CD4-positive, alpha-beta memory T cell (primary cell): ENCODE measurements at regions of chr11 and their contacts with region 1.

Region 1: DNA sequence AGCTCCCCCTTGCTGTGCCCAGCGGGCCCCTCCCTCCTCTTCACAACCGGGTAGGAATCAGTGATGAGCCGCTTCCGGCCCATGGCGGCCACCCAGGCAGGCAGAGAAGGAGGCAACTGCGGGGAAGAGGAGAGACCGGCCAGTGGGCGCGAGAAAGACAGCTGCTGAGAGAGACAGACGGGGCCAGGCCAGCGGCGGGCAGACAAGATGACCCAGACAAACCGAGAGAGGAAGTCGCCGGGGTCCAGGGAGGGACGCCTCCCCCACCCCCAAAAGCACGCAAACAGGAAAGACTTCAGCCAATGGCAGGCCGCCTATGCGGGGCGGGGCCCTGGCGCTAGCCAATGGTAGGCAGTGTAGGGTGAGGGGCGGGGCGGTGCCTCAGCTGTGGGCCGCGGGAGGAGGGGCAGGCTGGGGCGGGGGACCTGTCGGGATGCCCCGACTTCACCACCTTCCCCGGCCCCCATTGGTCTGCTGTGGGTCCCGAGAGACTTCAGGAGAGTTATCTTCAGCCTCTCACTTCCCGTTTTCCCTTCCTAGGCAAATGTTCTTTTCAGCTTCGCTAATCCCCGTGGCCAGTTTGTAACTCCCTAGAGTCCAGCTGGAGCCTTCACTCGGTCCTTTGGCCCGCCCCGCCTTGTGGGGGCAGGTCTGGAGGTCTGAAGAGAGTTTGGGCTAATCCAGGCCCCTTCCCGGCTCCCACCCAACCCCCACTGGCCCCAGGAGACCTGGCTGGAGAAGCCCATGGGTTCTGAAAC is at the start of gene POLD4:
- DNase-seq: peak; percentile 94 to 96 (median 95)
- H3K4me3 ChIP-seq: peak within 1 kb of the TSS; percentile 86 to 99
- H3K4me3 Mint-ChIP-seq: peak within 1 kb of the TSS; percentile 97 to 100 (median 99)
- H3K27ac ChIP-seq: peak within 1 kb of the TSS; percentile 96
- H3K27ac Mint-ChIP-seq: peak within 1 kb of the TSS; percentile 99 to 100 (median 100)
- H3K4me1 ChIP-seq: peaks cover 51% of the 10 kb centered on the region
- H3K4me1 Mint-ChIP-seq: peaks cover 31 to 68% (median 44%) of the 10 kb centered on the region in 4 donors
- H3K27me3 ChIP-seq: no peaks in the 10 kb centered on the region
- H3K27me3 Mint-ChIP-seq: no peaks in the 10 kb centered on the region
- total RNA-seq, gene POLD4: 87.9 to 91.3 TPM

Region 2: GRCh38 chr11:67277231-67277961 is 76.1 kb before region 1 on chr11:
- CTCF ChIA-PET with region 1: interaction called, 3 read pairs
- POLR2A ChIA-PET with region 1: interaction called, 19 read pairs
- intact Hi-C with region 1: no loop called
- DNase-seq: peak; percentile 92 to 96 (median 93)
- H3K4me3 ChIP-seq: peak overlapping the region; percentile 63 to 71
- H3K4me3 Mint-ChIP-seq: peak overlapping the region; percentile 79 to 92 (median 83)
- H3K27ac ChIP-seq: peak overlapping the region; percentile 95
- H3K27ac Mint-ChIP-seq: peak overlapping the region; percentile 94 to 99 (median 97)
- H3K4me1 ChIP-seq: peaks cover 98% of the 10 kb centered on the region
- H3K4me1 Mint-ChIP-seq: peaks cover 25 to 90% (median 54%) of the 10 kb centered on the region in 4 donors
- H3K27me3 ChIP-seq: no peaks in the 10 kb centered on the region
- H3K27me3 Mint-ChIP-seq: no peaks in the 10 kb centered on the region

Region 3: DNA sequence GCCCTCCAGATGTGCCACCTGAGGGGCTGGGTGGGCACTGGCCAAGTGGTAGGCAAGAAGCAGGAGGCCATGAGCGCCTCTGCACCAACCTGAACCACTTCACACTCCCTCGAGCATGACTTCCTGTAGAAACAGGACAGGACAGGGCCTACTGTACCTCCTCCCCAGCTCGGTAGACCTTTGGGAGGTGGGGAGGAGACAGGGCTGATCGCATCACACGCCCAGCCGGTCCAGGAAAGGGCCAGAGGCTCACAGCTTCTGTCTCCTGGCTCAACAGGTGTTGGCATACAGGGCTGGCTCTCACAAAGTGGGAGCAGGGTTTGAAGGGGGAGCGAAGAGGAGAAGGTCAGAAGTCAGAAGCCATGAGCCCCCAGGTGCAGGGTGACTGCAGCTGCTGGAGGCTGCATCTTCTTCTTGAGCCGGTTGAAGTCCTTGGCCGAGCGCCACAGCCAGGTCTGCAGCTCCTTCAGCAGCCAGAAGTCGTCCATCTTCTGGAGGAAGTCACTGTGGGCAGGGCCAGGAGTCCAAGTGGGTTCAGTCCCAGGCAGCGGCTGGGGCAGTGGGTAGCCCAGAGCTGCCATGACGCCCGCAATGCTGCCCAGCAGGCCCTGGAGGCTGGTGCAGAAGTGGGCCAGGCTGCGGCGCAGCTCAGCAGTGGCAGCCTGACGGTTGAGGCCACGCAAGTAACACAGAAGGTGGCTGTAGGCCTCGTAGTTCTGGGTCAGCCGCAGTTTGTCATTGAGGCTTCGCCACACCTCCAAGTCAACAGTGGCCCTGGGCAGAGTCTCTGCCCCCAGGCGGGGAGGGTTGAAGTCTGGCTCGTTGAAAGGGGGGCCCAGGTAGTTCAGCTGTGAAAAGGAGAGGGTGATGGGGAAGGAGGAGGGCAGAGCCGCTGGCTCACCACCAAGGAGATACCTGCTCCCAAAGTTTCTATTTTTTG is 11.6 kb after region 1 on chr11:
- CTCF ChIA-PET with region 1: interaction called, 1,065 read pairs
- POLR2A ChIA-PET with region 1: interaction called, 449 read pairs
- intact Hi-C with region 1: no loop called
- DNase-seq: no peak
- H3K4me3 ChIP-seq: no peak overlapping the region
- H3K4me3 Mint-ChIP-seq: peak overlapping the region in 7 of 8 donors; percentile 40 to 82 (median 66)
- H3K27ac ChIP-seq: no peak overlapping the region
- H3K27ac Mint-ChIP-seq: peak overlapping the region; percentile 75 to 95 (median 87)
- H3K4me1 ChIP-seq: peaks cover 50% of the 10 kb centered on the region
- H3K4me1 Mint-ChIP-seq: peaks cover 51 to 80% (median 66%) of the 10 kb centered on the region in 4 donors
- H3K27me3 ChIP-seq: no peaks in the 10 kb centered on the region
- H3K27me3 Mint-ChIP-seq: no peaks in the 10 kb centered on the region

Region 4: GRCh38 chr11:67401495-67402191 is 48.1 kb after region 1 on chr11 and contains the start of gene PPP1CA:
- CTCF ChIA-PET with region 1: interaction called, 9 read pairs
- POLR2A ChIA-PET with region 1: interaction called, 84 read pairs
- intact Hi-C with region 1: no loop called
- DNase-seq: peak; percentile 87 to 97 (median 92)
- H3K4me3 ChIP-seq: peak within 1 kb of the TSS; percentile 78 to 88
- H3K4me3 Mint-ChIP-seq: peak within 1 kb of the TSS; percentile 89 to 97 (median 92)
- H3K27ac ChIP-seq: peak within 1 kb of the TSS; percentile 81
- H3K27ac Mint-ChIP-seq: peak within 1 kb of the TSS; percentile 83 to 98 (median 89)
- H3K4me1 ChIP-seq: peaks cover 78% of the 10 kb centered on the region
- H3K4me1 Mint-ChIP-seq: peaks cover 27 to 80% (median 45%) of the 10 kb centered on the region in 4 donors
- H3K27me3 ChIP-seq: no peaks in the 10 kb centered on the region
- H3K27me3 Mint-ChIP-seq: no peaks in the 10 kb centered on the region
- total RNA-seq, gene PPP1CA: 159 to 161 TPM

Region 5: GRCh38 chr11:67482825-67483798 is 129.6 kb after region 1 on chr11 and contains the start of gene AIP:
- CTCF ChIA-PET with region 1: interaction called, 6 read pairs
- POLR2A ChIA-PET with region 1: interaction called, 15 read pairs
- intact Hi-C with region 1: loop called (anchors 2 kb)
- DNase-seq: peak; percentile 97 to 98 (median 98)
- H3K4me3 ChIP-seq: peak within 1 kb of the TSS; percentile 64 to 78
- H3K4me3 Mint-ChIP-seq: peak within 1 kb of the TSS; percentile 95 to 100 (median 98)
- H3K27ac ChIP-seq: peak within 1 kb of the TSS; percentile 91
- H3K27ac Mint-ChIP-seq: peak within 1 kb of the TSS; percentile 94 to 100 (median 99)
- H3K4me1 ChIP-seq: peaks cover 57% of the 10 kb centered on the region
- H3K4me1 Mint-ChIP-seq: peaks cover 41 to 59% (median 50%) of the 10 kb centered on the region in 4 donors
- H3K27me3 ChIP-seq: no peaks in the 10 kb centered on the region
- H3K27me3 Mint-ChIP-seq: no peaks in the 10 kb centered on the region
- total RNA-seq, gene AIP: 131 to 132 TPM

Region 6: GRCh38 chr11:67656278-67656922 is 302.9 kb after region 1 on chr11:
- CTCF ChIA-PET with region 1: no interaction called
- POLR2A ChIA-PET with region 1: interaction called, 3 read pairs
- intact Hi-C with region 1: loop called (anchors 1 kb)
- DNase-seq: no peak
- H3K4me3 ChIP-seq: no peak overlapping the region
- H3K4me3 Mint-ChIP-seq: no peak overlapping the region
- H3K27ac ChIP-seq: no peak overlapping the region
- H3K27ac Mint-ChIP-seq: no peak overlapping the region
- H3K4me1 ChIP-seq: peaks cover 6% of the 10 kb centered on the region
- H3K4me1 Mint-ChIP-seq: peaks cover 0 to 10% (median 4%) of the 10 kb centered on the region in 4 donors
- H3K27me3 ChIP-seq: no peaks in the 10 kb centered on the region
- H3K27me3 Mint-ChIP-seq: no peaks in the 10 kb centered on the region